ENCODE measurements at regions of chr3 and their contacts with region 1.

Region 1: GRCh38 chr3:2078821-2079220 is 19.8 kb upstream of the CNTN4 start:
- DNase-seq: no peak
- ATAC-seq: peak; percentile 66
- H3K4me3 ChIP-seq: no peak overlapping the region
- H3K27ac ChIP-seq: peak overlapping the region in 1 of 2 donors; percentile 98
- H3K4me1 ChIP-seq: peaks cover 3 to 5% of the 10 kb centered on the region in 2 donors
- H3K27me3 ChIP-seq: no peaks in the 10 kb centered on the region

Region 2: DNA sequence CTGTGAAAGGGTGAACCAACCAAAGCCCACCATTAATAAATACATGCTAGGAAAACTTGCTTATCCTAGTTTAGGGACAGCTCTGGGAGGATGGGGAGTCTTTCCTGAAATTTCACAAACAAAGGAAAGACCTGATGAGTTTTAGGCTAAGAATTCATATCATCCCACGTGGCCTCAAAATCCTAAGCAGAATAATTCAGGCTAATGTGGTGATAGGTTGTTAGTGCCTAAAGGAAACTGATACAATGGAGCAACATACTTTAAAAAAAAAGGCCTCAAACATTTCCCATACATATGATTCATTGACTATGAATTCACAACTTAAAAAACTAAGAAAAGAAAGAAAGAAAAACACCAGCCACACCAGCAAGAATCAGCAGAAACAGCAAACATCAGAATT is 107.0 kb before region 1 on chr3:
- intact Hi-C with region 1: loop called in 1 of 2 experiments (anchors 5 kb)
- DNase-seq: no peak
- ATAC-seq: no peak
- H3K4me3 ChIP-seq: no peak overlapping the region
- H3K27ac ChIP-seq: no peak overlapping the region
- H3K4me1 ChIP-seq: peaks cover 0 to 3% of the 10 kb centered on the region in 2 donors
- H3K27me3 ChIP-seq: no peaks in the 10 kb centered on the region